Activated CD4-positive, alpha-beta T cell treated with anti-CD3 and anti-CD28 coated beads for 36 hours (primary cell): ENCODE measurements at regions of chr22 and their contacts with region 1.

Region 1: GRCh38 chr22:44180706-44181032 is at the start of gene PARVG:
- DNase-seq: peak; percentile 51
- ATAC-seq: peak; percentile 35
- H3K4me3 Mint-ChIP-seq: peak within 1 kb of the TSS; percentile 86
- H3K27ac Mint-ChIP-seq: peak within 1 kb of the TSS; percentile 97
- H3K4me1 Mint-ChIP-seq: peaks cover 20% of the 10 kb centered on the region
- H3K27me3 Mint-ChIP-seq: no peaks in the 10 kb centered on the region
- total RNA-seq, gene PARVG: 61.7 to 74.3 TPM

Region 2: GRCh38 chr22:43151251-43152002 is 1029.2 kb before region 1 on chr22 and contains the start of gene TSPO:
- CTCF ChIA-PET with region 1: no interaction called
- POLR2A ChIA-PET with region 1: no interaction called
- intact Hi-C with region 1: no loop called
- DNase-seq: peak; percentile 81
- ATAC-seq: peak; percentile 58
- H3K4me3 Mint-ChIP-seq: peak within 1 kb of the TSS; percentile 88
- H3K27ac Mint-ChIP-seq: peak within 1 kb of the TSS; percentile 90
- H3K4me1 Mint-ChIP-seq: peaks cover 35% of the 10 kb centered on the region
- H3K27me3 Mint-ChIP-seq: no peaks in the 10 kb centered on the region
- total RNA-seq, gene TSPO: 61.7 to 114 TPM

Region 3: GRCh38 chr22:43580351-43580750 is 600.3 kb before region 1 on chr22:
- CTCF ChIA-PET with region 1: no interaction called
- POLR2A ChIA-PET with region 1: no interaction called
- intact Hi-C with region 1: no loop called
- DNase-seq: no peak
- ATAC-seq: no peak
- H3K4me3 Mint-ChIP-seq: no peak overlapping the region
- H3K27ac Mint-ChIP-seq: no peak overlapping the region
- H3K4me1 Mint-ChIP-seq: no peaks in the 10 kb centered on the region
- H3K27me3 Mint-ChIP-seq: peaks cover 19% of the 10 kb centered on the region

Region 4: GRCh38 chr22:43993027-43993760 is 187.5 kb before region 1 on chr22:
- CTCF ChIA-PET with region 1: no interaction called
- POLR2A ChIA-PET with region 1: no interaction called
- intact Hi-C with region 1: loop called in 1 of 2 experiments (anchors 10 kb)
- DNase-seq: peak; percentile 74
- ATAC-seq: peak; percentile 74
- H3K4me3 Mint-ChIP-seq: no peak overlapping the region
- H3K27ac Mint-ChIP-seq: no peak overlapping the region
- H3K4me1 Mint-ChIP-seq: peaks cover 29% of the 10 kb centered on the region
- H3K27me3 Mint-ChIP-seq: no peaks in the 10 kb centered on the region

Region 5: DNA sequence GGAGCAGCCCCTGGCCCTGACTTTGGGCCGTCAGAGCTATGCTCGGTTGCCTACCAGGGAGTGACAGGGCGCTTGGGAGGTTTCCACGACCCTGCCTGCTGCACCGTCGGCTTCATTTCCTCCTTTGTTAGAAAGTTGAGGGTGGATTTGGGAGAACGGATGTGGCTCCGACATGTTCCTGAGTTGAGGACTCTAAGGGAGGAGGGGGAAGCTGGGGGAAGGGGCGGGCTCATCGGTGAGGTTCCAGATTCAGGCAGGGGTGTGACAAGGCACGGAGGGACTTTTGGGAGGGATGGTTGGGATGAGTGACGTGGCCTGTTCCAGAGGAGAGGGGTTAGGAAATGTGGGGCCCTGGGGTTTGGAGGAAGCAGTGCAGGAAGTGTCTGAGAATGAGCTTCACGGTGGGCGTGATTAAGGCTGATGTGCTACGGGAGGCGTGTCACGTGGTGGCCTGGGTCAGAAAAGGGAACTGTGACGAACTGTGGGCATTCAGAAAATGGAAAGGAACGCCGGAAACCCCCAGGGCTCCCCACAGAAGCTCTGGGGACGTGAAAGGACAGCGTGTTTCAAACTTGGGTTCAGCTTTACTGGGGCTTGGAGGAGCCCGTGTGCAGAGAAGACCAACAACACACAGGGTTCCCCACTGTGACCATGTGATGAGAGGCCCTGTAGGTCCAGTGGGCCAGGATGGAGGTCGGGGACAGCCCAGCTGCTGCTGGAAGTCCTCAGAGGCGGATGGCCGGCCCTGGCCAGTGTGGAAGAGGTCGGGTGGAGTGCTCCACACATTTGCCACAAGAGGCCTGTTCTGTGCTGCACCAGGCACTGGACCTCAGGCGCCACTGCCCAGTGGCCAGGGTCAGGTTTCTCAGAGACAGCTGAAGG is 153.8 kb before region 1 on chr22:
- CTCF ChIA-PET with region 1: no interaction called
- POLR2A ChIA-PET with region 1: no interaction called
- intact Hi-C with region 1: loop called in 1 of 2 experiments (anchors 5 kb)
- DNase-seq: peak; percentile 86
- ATAC-seq: peak; percentile 76
- H3K4me3 Mint-ChIP-seq: peak overlapping the region; percentile 78
- H3K27ac Mint-ChIP-seq: peak overlapping the region; percentile 93
- H3K4me1 Mint-ChIP-seq: peaks cover 41% of the 10 kb centered on the region
- H3K27me3 Mint-ChIP-seq: peaks cover 9% of the 10 kb centered on the region

Region 6: GRCh38 chr22:44068422-44069191 is 112.1 kb before region 1 on chr22:
- CTCF ChIA-PET with region 1: no interaction called
- POLR2A ChIA-PET with region 1: no interaction called
- intact Hi-C with region 1: no loop called
- DNase-seq: no peak
- ATAC-seq: no peak
- H3K4me3 Mint-ChIP-seq: no peak overlapping the region
- H3K27ac Mint-ChIP-seq: no peak overlapping the region
- H3K4me1 Mint-ChIP-seq: peaks cover 6% of the 10 kb centered on the region
- H3K27me3 Mint-ChIP-seq: peaks cover 2% of the 10 kb centered on the region

Region 7: GRCh38 chr22:44497218-44497904 is 316.7 kb after region 1 on chr22:
- CTCF ChIA-PET with region 1: no interaction called
- POLR2A ChIA-PET with region 1: no interaction called
- intact Hi-C with region 1: loop called in 1 of 2 experiments (anchors 1 kb)
- DNase-seq: no peak
- ATAC-seq: no peak
- H3K4me3 Mint-ChIP-seq: peak overlapping the region; percentile 68
- H3K27ac Mint-ChIP-seq: peak overlapping the region; percentile 47
- H3K4me1 Mint-ChIP-seq: peaks cover 30% of the 10 kb centered on the region
- H3K27me3 Mint-ChIP-seq: no peaks in the 10 kb centered on the region

Region 8: DNA sequence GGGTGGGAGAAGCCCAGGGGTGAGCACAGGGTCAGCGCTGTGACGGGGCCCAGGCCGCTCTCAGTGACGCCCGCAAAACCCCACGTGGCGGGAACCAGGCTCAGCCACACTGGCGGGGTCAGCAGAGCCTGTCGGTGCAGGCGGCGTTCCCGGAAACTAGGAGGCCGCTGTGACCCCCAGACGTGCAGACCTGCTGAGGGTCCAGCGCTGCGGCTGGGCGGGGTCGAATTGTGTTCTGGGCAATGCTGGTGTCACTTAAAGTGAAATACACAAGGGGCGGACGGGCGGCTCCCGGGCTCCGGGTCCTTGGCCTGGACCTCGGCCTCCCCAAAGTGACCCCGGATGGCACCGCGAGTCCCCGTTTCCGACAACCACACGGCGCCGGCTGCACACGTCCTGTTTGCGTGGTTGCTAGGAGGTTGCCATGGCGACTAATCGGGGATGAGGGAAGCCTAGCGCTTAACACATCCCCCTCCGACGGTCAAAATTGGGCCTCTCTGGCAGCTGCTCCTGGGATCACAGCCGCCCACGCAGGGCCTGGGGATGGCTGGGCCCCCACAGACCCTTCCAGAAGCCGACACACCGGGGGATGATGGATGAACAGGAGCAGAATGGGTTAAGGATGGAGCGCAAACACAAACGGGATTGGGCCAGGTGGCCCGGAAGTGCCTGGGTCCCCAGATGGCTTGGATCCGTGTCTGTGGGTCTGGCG is 439.6 kb after region 1 on chr22:
- CTCF ChIA-PET with region 1: no interaction called
- POLR2A ChIA-PET with region 1: no interaction called
- intact Hi-C with region 1: loop called in 1 of 2 experiments (anchors 5 kb)
- DNase-seq: peak; percentile 89
- ATAC-seq: peak; percentile 76
- H3K4me3 Mint-ChIP-seq: no peak overlapping the region
- H3K27ac Mint-ChIP-seq: peak overlapping the region; percentile 68
- H3K4me1 Mint-ChIP-seq: no peaks in the 10 kb centered on the region
- H3K27me3 Mint-ChIP-seq: no peaks in the 10 kb centered on the region